Common myeloid progenitor, CD34-positive (primary cell): ENCODE measurements at regions of chr9 and their contacts with region 1.

Region 1: GRCh38 chr9:124776954-124777665 is at the start of gene OLFML2A:
- DNase-seq: peak in 2 of 3 donors; percentile 64 to 70
- H3K4me3 ChIP-seq: peak within 1 kb of the TSS; percentile 16 to 78 (median 68)
- H3K27ac ChIP-seq: no peak within 1 kb of the TSS
- H3K4me1 ChIP-seq: peaks cover 0 to 38% (median 20%) of the 10 kb centered on the region in 4 experiments
- H3K27me3 ChIP-seq: peaks cover 0 to 6% (median 3%) of the 10 kb centered on the region in 5 experiments

Region 2: DNA sequence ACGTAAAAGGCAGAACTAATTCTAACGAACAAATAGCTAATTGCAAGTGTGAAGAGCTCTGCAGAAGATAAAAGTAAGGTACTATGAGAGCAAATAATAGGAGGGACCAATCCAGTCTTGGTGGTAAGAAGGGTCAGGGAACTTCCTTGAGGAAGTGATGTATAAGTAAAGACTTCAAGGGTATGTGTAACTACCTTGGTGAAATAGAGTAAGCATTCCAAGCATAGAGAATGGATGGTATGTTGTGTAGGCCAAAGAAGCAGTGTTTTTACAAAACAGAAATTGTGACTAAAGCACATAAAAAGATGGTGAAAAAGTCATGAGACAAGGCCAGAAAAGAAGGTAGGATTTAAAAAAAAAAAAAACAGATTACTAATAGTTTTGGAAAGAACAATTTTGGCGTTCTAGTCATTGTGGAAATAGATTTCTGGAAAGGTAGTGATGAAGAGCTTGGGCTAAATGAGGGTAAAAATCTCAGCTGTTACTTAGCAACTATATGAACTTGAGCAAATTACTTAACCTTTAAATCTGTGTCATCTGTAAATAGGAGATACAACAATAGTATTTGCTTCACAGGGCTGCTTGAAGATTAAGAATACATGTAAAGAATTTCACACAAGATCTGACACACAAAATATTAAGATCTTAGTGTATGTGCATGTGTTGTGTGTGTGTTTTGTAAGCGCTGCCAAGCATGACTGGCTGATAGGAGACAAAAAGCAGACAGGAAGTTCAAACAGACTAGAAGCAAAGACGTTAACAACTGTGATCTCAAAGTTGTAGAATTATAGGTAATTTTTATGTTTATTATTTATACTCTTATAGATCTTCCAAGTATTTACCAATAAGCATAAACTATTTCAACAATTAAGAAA is 79.5 kb before region 1 on chr9:
- CTCF ChIA-PET with region 1: no interaction called
- POLR2A ChIA-PET with region 1: no interaction called
- DNase-seq: peak in 2 of 3 donors; percentile 22 to 42
- H3K4me3 ChIP-seq: no peak overlapping the region
- H3K27ac ChIP-seq: no peak overlapping the region
- H3K4me1 ChIP-seq: peaks cover 0 to 9% (median 3%) of the 10 kb centered on the region in 4 experiments
- H3K27me3 ChIP-seq: no peaks in the 10 kb centered on the region

Region 3: DNA sequence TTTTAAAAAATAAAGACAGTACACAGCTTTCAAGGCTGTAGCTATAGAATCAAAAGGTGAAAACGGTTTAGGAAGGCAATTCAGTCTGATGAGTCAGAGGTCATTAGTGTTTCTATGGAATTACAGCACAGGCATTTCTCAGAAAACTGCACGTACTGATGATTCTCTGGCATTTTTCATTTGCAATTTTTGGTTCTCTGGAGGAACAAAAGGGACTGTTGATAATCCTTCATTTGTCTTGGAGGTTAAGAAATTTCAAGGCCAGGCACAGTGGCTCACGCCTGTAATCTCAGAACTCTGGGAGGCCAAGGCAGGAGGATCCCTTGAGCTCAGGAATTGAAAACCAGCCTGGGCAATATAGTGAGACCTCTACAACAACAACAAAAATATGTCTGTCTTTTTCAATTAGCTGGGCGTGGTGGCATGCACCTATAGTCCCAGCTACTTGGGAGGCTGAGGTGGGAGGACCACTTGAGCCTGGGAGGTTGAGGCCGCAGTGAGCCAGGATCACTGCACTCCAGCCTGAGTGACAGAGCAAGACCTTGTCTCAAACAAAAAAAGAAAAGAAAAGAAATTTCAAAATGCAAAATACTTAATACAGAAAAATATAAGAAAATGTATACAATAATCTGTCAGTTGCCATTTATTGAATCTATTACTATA is 33.3 kb before region 1 on chr9:
- CTCF ChIA-PET with region 1: no interaction called
- POLR2A ChIA-PET with region 1: no interaction called
- DNase-seq: no peak
- H3K4me3 ChIP-seq: no peak overlapping the region
- H3K27ac ChIP-seq: peak overlapping the region in 1 of 2 experiments; percentile 54
- H3K4me1 ChIP-seq: peaks cover 0 to 10% (median 1%) of the 10 kb centered on the region in 4 experiments
- H3K27me3 ChIP-seq: no peaks in the 10 kb centered on the region

Region 4: DNA sequence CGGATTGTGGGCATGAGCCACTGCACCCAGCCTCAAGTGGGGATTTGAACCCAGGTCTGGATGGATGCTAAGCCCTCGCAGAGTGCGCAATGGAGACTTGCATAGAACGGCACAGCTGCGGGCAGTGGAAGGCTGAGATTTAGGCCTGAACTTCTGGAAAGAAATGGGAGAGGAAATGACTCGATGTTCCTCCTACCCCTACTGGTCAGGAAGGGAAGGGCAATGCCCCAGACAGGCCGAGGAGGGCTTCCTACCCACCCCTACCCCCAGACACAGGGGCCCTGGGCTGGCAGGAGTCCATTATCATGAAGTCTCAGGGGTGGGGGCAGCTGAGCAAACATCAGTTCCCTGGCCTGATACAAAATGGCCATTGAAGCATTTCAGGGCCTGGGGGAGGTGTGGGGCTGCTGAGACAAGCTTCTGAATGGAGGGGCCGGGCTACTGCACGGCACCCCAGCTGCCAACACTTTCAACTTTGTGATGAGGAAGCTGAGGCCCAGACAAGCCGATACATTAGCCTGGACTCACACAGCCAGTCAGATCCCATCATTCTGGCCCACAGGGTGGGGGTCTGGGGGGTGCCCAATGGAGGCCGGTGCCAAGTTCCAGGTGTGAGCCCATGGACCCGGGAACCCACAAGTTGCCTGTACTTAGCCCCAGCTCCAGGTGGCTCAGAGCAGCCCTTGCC is 62.6 kb after region 1 on chr9:
- CTCF ChIA-PET with region 1: interaction called, 547 read pairs
- POLR2A ChIA-PET with region 1: no interaction called
- DNase-seq: peak in 2 of 3 donors; percentile 43 to 52
- H3K4me3 ChIP-seq: no peak overlapping the region
- H3K27ac ChIP-seq: no peak overlapping the region
- H3K4me1 ChIP-seq: peaks cover 0 to 8% (median 8%) of the 10 kb centered on the region in 4 experiments
- H3K27me3 ChIP-seq: no peaks in the 10 kb centered on the region